ENCODE measurements at regions of chr1 and their contacts with region 1.

Region 1: GRCh38 chr1:26616881-26617280 is 78.9 kb upstream of the ARID1A start:
- DNase-seq: no peak
- H3K4me3 ChIP-seq: no peak overlapping the region
- H3K27ac ChIP-seq: no peak overlapping the region
- H3K4me1 ChIP-seq: peaks cover 21% of the 10 kb centered on the region
- H3K27me3 ChIP-seq: no peaks in the 10 kb centered on the region
- CTCF ChIP-seq: no peak
- POLR2A ChIP-seq: no peak

Region 2: GRCh38 chr1:26372039-26372438 is 244.8 kb before region 1 on chr1:
- intact Hi-C with region 1: no loop called
- DNase-seq: no peak
- H3K4me3 ChIP-seq: no peak overlapping the region
- H3K27ac ChIP-seq: no peak overlapping the region
- H3K4me1 ChIP-seq: no peaks in the 10 kb centered on the region
- H3K27me3 ChIP-seq: no peaks in the 10 kb centered on the region
- CTCF ChIP-seq: no peak
- POLR2A ChIP-seq: no peak

Region 3: GRCh38 chr1:26602378-26602959 is 14.4 kb before region 1 on chr1:
- intact Hi-C with region 1: loop called (anchors 2 kb)
- DNase-seq: no peak
- H3K4me3 ChIP-seq: no peak overlapping the region
- H3K27ac ChIP-seq: no peak overlapping the region
- H3K4me1 ChIP-seq: no peaks in the 10 kb centered on the region
- H3K27me3 ChIP-seq: no peaks in the 10 kb centered on the region
- CTCF ChIP-seq: peak; percentile 72 to 90 (median 74)
- POLR2A ChIP-seq: no peak